GM10248 (cell line): ENCODE measurements at regions of chr19 and their contacts with region 1.

Region 1: GRCh38 chr19:55301459-55302317 is 17.9 kb downstream of the BRSK1 start:
- DNase-seq: peak; percentile 97
- CTCF ChIP-seq: peak; percentile 92

Region 2: DNA sequence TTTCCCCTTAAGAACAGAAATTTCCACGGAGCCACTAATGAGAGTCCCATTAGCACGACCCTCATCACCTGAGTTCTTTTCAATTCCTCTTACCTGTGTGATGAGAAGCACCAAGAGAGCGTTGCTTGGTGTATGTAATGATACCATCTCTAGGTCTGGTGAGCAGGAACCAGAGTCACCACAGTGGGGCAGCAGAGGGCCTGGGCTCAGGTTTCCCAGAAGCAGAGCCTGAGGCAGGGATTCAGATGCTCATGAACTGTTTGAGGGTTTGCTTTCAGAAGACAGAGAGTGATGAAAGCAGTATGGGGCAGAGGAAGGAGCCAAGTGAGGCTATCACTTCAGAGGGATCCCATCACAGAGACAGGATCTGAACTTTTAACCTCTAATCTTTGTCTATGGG is 89.2 kb before region 1 on chr19:
- CTCF ChIA-PET with region 1: no interaction called
- POLR2A ChIA-PET with region 1: no interaction called
- DNase-seq: no peak
- CTCF ChIP-seq: peak; percentile 20

Region 3: GRCh38 chr19:55289117-55289796 is 12.4 kb before region 1 on chr19:
- CTCF ChIA-PET with region 1: interaction called, 80 read pairs
- POLR2A ChIA-PET with region 1: no interaction called
- DNase-seq: no peak
- CTCF ChIP-seq: no peak

Region 4: GRCh38 chr19:55319785-55320184 is 18.1 kb after region 1 on chr19:
- CTCF ChIA-PET with region 1: interaction called, 42 read pairs
- POLR2A ChIA-PET with region 1: no interaction called
- DNase-seq: no peak
- CTCF ChIP-seq: no peak

Region 5: DNA sequence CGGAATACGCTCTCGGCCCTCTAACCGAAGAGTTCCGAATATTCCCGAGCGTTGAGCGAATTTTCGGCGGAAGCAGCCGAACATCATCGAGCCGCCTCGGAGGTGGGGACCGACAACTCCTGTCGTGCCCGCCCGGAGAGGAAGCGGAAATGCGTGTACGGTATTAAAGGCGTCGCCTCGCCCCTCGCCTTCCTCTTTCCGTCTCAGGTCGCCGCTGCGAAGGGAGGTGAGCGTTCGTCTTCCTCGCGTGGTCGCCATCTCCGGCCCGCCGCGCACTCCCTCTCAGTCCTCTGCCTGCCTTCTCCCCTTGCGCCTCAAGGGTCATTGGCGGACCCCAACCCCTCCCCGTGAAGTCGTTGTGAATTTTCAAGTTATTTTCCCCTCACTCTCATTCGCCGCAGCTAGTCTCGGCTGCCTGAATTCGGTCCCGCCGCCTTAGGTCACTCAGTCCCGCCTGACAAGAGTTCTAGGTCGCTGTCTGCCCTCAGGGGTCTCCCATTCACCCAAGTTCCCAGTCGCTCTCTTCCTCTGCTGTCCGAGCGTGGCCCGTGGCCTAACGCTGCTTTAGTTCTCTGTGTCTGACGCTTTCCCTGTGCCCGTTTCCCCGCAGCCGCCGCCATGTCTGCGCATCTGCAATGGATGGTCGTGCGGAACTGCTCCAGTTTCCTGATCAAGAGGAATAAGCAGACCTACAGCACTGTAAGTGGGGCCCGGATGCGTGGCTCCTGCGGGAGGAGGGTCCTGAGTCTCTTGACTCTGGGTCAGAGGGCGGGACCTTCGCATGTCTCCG is 84.2 kb after region 1 on chr19 and contains the start of gene RPL28:
- CTCF ChIA-PET with region 1: interaction called, 19 read pairs
- POLR2A ChIA-PET with region 1: no interaction called
- DNase-seq: peak; percentile 98
- CTCF ChIP-seq: no peak